Endothelial cell of umbilical vein (primary cell): ENCODE measurements at regions of chr11 and their contacts with region 1.

Region 1: GRCh38 chr11:69683764-69684333 is 8.7 kb upstream of the LTO1 start:
- DNase-seq: no peak
- H3K4me3 ChIP-seq: no peak overlapping the region
- H3K27ac ChIP-seq: no peak overlapping the region
- H3K4me1 ChIP-seq: no peaks in the 10 kb centered on the region
- H3K27me3 ChIP-seq: peaks cover 0 to 2% of the 10 kb centered on the region in 2 experiments
- CTCF ChIP-seq: peak; percentile 29 to 46
- POLR2A ChIP-seq: no peak

Region 2: DNA sequence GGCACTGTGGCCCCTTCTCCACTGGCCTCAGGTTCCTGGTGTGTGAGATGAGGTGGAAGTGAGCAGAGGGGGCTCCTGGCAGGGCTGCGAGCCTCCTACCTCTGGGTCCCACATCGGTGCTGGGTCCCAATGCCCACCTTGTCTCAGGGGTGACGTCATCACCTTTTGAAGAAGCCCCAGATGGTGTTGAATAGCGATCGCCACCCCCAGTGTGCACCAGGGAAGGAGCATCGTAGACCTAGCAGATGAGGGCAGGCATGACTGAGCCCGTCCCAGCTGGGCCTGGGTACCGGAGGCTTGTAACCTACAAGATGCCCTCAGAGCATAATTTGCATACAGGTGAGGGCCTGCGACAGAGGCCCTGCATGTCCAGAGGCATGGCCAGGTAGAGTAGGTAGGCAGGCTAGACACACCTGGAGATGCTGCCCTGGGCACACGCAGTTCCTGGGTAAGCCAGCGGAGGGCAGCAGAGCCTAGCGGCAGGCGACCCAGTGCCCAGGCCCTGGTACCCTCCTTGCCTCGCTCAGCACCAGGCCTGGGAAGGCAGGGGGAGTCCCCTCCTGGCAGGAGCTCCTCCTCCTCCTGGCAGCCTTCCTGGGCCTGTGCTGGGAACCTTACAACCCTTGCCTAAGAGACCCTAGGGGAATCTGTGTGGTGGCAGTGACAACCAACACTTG is 582.6 kb before region 1 on chr11:
- CTCF ChIA-PET with region 1: interaction called, 19 read pairs
- POLR2A ChIA-PET with region 1: no interaction called
- dilution Hi-C with region 1: no loop called
- intact Hi-C with region 1: loop called (anchors 1 kb)
- DNase-seq: peak; percentile 71
- H3K4me3 ChIP-seq: no peak overlapping the region
- H3K27ac ChIP-seq: no peak overlapping the region
- H3K4me1 ChIP-seq: peaks cover 5% of the 10 kb centered on the region
- H3K27me3 ChIP-seq: peaks cover 0 to 2% of the 10 kb centered on the region in 2 experiments
- CTCF ChIP-seq: peak; percentile 98 to 99
- POLR2A ChIP-seq: peak; percentile 37

Region 3: DNA sequence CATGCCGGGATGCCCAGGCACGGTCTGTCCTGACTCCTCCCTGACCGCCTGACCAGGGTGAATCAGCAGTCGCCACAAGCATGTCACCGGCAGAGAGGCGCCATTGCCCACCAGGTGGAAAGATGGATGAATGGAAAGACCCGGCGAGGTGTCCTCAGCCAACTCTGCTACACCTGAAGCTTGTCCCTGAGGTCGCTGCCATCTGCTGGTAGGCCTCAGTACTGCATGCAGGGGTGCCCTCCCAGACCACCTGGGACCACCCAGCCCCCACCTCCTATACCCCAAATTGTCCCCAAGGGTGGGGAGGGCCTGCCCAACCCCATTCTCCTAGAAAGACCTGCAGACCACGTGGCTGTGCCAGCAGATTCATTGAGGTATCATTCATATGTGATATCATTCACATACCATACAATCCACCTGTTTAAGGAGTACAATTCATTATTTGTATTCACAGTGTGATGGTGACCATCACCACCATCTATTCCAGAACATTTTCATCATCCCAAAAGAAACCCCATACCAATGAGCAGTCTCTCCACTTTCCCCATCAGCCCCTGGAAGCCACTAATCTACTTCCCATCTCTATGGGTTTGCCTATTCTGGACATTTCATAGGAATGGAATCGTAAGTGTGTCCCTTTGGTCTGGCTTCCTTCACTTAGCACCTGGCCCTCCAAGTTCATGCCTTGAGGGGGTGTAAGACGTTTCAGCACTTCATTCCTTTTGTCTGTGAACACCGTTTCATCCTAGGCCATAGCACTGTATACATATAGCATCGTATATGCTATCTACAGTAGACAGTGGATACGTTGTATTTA is 117.9 kb after region 1 on chr11:
- CTCF ChIA-PET with region 1: interaction called, 11 read pairs
- POLR2A ChIA-PET with region 1: no interaction called
- dilution Hi-C with region 1: no loop called
- intact Hi-C with region 1: loop called (anchors 1 kb)
- DNase-seq: peak; percentile 35
- H3K4me3 ChIP-seq: no peak overlapping the region
- H3K27ac ChIP-seq: no peak overlapping the region
- H3K4me1 ChIP-seq: no peaks in the 10 kb centered on the region
- H3K27me3 ChIP-seq: no peaks in the 10 kb centered on the region
- CTCF ChIP-seq: peak; percentile 53 to 91
- POLR2A ChIP-seq: no peak

Region 4: DNA sequence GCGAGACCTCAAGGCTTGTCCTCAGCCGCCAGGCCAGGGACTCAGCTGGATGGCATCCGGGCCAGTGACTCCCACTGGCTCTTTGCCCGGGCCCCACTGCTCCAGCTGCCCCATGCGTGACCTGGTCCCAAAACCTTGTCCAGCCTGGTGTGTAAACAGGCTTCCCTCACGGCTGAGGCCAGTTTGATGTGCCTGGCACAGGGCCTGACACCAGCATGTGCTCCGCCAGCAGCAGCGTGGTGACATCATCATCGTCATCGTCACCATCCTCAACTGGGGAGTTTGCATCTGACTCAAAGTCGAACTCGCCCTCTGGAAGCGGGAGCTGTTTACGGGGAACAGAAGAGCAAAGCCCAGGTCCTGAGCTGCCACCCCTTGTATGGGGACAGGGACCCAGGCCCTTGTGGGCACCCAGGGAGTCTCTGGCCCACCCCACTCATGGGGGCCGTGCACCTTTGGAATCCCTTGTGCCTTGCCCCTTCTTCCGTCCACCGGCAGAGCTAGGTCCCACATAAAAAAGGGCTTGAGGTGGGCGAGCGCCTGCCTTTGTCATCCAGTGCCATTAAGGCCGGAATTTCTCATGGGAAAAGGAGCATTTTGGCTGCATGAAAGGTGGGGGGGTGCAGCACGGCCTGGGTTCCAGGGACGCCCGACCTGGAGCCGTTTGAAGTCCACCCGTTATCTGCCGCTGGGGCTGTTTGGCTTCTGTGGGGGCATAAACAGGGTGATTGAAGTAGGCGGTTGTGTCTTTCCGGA is 184.1 kb after region 1 on chr11:
- CTCF ChIA-PET with region 1: no interaction called
- POLR2A ChIA-PET with region 1: no interaction called
- dilution Hi-C with region 1: no loop called
- intact Hi-C with region 1: no loop called
- DNase-seq: no peak
- H3K4me3 ChIP-seq: no peak overlapping the region
- H3K27ac ChIP-seq: no peak overlapping the region
- H3K4me1 ChIP-seq: no peaks in the 10 kb centered on the region
- H3K27me3 ChIP-seq: peaks cover 14 to 23% of the 10 kb centered on the region in 2 experiments
- CTCF ChIP-seq: no peak
- POLR2A ChIP-seq: no peak

Region 5: DNA sequence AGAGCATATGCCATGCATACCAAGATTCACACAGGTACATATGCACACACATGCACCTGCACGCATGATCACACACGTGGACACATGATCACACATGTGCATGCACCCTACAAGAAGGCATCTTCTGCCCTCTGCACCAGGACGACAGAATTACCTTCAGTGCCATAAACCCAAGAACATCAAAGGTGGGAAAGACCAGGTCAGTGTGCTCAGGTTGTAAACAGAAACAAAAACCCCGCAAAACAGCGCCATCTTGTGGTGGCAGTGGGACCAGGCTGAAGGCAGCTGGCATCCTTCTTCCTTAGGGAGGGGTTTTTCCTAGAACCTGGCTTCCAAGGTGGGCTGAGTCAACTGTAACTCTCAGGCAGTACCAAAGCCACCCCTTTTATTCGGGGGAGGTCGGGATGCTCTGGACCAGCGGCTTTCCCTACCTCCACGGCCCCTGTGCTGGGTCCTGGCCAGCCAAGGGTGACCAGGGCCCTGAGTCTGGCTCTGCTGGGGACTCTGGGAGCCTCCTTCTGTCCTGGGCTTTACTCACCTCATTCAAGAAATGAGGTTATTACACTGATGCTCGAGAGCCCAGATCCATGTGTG is 204.7 kb after region 1 on chr11:
- CTCF ChIA-PET with region 1: interaction called, 23 read pairs
- POLR2A ChIA-PET with region 1: no interaction called
- dilution Hi-C with region 1: no loop called
- intact Hi-C with region 1: loop called (anchors 1 kb)
- DNase-seq: peak; percentile 58
- H3K4me3 ChIP-seq: no peak overlapping the region
- H3K27ac ChIP-seq: no peak overlapping the region
- H3K4me1 ChIP-seq: no peaks in the 10 kb centered on the region
- H3K27me3 ChIP-seq: peaks cover 32 to 34% of the 10 kb centered on the region in 2 experiments
- CTCF ChIP-seq: peak; percentile 95 to 97
- POLR2A ChIP-seq: no peak

Region 6: GRCh38 chr11:70191495-70192140 is 507.8 kb after region 1 on chr11:
- CTCF ChIA-PET with region 1: interaction called, 3 read pairs
- POLR2A ChIA-PET with region 1: no interaction called
- dilution Hi-C with region 1: no loop called
- intact Hi-C with region 1: loop called (anchors 5 kb)
- DNase-seq: peak; percentile 54
- H3K4me3 ChIP-seq: no peak overlapping the region
- H3K27ac ChIP-seq: no peak overlapping the region
- H3K4me1 ChIP-seq: no peaks in the 10 kb centered on the region
- H3K27me3 ChIP-seq: no peaks in the 10 kb centered on the region
- CTCF ChIP-seq: peak; percentile 84 to 98
- POLR2A ChIP-seq: no peak